Caco-2 (cell line): ENCODE measurements at regions of chr2 and their contacts with region 1.

Region 1: GRCh38 chr2:193584522-193584938 is 1389.8 kb upstream of the TMEFF2 start:
- DNase-seq: peak; percentile 55 to 63
- H3K4me3 ChIP-seq: no peak overlapping the region
- H3K4me3 Mint-ChIP-seq: no peak overlapping the region
- H3K27ac Mint-ChIP-seq: peak overlapping the region; percentile 17
- H3K4me1 ChIP-seq: peaks cover 9% of the 10 kb centered on the region; the same call in 1 of the 2 replicates
- H3K4me1 Mint-ChIP-seq: peaks cover 14% of the 10 kb centered on the region
- H3K27me3 ChIP-seq: no peaks in the 10 kb centered on the region
- H3K27me3 Mint-ChIP-seq: no peaks in the 10 kb centered on the region
- CTCF ChIP-seq: peak; percentile 58 to 59

Region 2: GRCh38 chr2:192749606-192750200 is 834.8 kb before region 1 on chr2:
- CTCF ChIA-PET with region 1: interaction called, 8 read pairs
- POLR2A ChIA-PET with region 1: no interaction called
- intact Hi-C with region 1: loop called (anchors 1 kb)
- DNase-seq: peak in 1 of 2 experiments; percentile 6
- H3K4me3 ChIP-seq: no peak overlapping the region
- H3K4me3 Mint-ChIP-seq: no peak overlapping the region
- H3K27ac Mint-ChIP-seq: no peak overlapping the region
- H3K4me1 ChIP-seq: no peaks in the 10 kb centered on the region
- H3K4me1 Mint-ChIP-seq: no peaks in the 10 kb centered on the region
- H3K27me3 ChIP-seq: no peaks in the 10 kb centered on the region
- H3K27me3 Mint-ChIP-seq: no peaks in the 10 kb centered on the region
- CTCF ChIP-seq: peak; percentile 42 to 46

Region 3: DNA sequence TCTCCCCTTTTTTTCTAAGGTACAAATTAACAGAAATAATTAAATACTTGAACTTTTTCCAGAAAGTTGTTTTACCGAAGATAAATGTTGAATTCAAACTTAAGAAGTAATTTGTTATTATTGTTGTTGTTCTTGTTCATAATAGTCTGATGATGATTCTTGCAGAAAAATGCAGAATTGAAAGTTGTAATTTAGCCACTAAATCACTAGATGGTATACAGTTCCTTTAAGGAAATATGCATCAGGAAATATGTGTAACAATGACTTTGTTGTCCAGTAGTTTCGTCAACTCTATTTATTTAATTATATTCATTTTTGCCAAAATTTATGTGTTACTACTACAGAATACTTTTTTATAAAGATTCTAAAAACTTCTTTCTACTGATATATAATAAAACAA is 473.0 kb before region 1 on chr2:
- CTCF ChIA-PET with region 1: no interaction called
- POLR2A ChIA-PET with region 1: no interaction called
- intact Hi-C with region 1: loop called (anchors 2 kb)
- DNase-seq: no peak
- H3K4me3 ChIP-seq: no peak overlapping the region
- H3K4me3 Mint-ChIP-seq: no peak overlapping the region
- H3K27ac Mint-ChIP-seq: no peak overlapping the region
- H3K4me1 ChIP-seq: no peaks in the 10 kb centered on the region
- H3K4me1 Mint-ChIP-seq: no peaks in the 10 kb centered on the region
- H3K27me3 ChIP-seq: no peaks in the 10 kb centered on the region
- H3K27me3 Mint-ChIP-seq: no peaks in the 10 kb centered on the region
- CTCF ChIP-seq: no peak

Region 4: DNA sequence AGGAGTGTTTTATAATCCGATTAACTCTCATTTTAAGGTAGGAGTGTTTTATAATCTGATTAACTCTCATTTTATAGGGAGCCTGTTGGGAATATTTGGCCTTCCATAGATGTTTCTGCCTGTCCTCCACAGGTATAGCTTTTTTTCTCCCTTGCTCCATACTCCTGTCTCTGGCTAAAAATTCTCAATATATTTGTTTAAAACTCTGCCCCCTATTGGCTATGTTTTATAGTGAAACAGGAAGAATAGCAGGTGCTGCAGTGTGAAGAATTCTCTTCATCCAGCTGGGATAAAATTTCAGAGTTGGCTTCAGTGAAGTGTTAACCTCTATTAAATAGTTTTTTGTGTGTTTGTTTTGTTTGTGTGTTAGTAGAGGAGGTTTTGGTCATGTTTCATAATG is 343.8 kb before region 1 on chr2:
- CTCF ChIA-PET with region 1: no interaction called
- POLR2A ChIA-PET with region 1: no interaction called
- intact Hi-C with region 1: loop called (anchors 2 kb)
- DNase-seq: peak in 1 of 2 experiments; percentile 16
- H3K4me3 ChIP-seq: no peak overlapping the region
- H3K4me3 Mint-ChIP-seq: no peak overlapping the region
- H3K27ac Mint-ChIP-seq: no peak overlapping the region
- H3K4me1 ChIP-seq: no peaks in the 10 kb centered on the region
- H3K4me1 Mint-ChIP-seq: no peaks in the 10 kb centered on the region
- H3K27me3 ChIP-seq: no peaks in the 10 kb centered on the region
- H3K27me3 Mint-ChIP-seq: no peaks in the 10 kb centered on the region
- CTCF ChIP-seq: peak in 1 of 2 experiments; percentile 7

Region 5: DNA sequence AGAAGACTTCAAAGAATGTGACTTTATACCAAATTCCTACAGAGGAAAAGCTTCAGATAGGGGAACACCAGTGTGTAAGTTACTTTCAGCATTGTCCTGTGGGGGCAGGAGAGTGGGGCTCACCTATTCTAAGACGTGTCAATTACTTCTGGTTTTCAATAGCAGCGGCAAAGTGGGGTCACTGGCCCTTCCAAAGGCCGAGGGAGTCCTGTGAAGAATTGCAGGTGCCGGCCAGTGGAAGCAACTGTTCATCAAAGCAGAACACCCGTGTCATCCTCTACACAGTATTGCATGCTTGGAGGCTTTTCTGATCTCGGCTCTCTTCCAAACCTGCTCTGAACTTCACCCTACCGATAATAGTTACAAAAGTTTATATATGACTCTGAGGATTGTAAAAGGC is 213.3 kb before region 1 on chr2:
- CTCF ChIA-PET with region 1: no interaction called
- POLR2A ChIA-PET with region 1: no interaction called
- intact Hi-C with region 1: loop called (anchors 5 kb)
- DNase-seq: no peak
- H3K4me3 ChIP-seq: no peak overlapping the region
- H3K4me3 Mint-ChIP-seq: no peak overlapping the region
- H3K27ac Mint-ChIP-seq: no peak overlapping the region
- H3K4me1 ChIP-seq: no peaks in the 10 kb centered on the region
- H3K4me1 Mint-ChIP-seq: no peaks in the 10 kb centered on the region
- H3K27me3 ChIP-seq: no peaks in the 10 kb centered on the region
- H3K27me3 Mint-ChIP-seq: no peaks in the 10 kb centered on the region
- CTCF ChIP-seq: no peak

Region 6: DNA sequence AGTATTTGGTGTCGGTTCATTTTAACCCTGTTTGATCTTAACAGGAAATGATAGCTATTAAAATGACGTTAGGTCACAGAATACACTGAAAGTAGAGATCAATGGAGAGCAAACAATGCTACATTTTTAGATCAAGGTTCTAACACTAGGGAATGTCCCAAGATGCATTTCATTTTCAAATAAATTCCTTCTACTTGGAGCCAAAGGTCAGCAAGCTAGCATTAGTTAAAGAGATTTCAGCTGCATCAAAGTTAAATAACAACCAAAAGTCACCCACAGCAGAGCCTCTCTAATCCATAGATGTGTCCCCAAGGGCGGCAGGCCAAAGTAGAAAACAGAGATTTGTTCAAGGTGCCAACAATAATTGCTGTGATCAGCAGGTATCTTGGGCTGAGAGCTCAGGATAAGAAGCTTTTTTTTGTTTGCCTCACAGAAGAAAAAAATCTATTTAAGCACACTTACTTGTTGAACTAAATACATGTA is 156.2 kb before region 1 on chr2:
- CTCF ChIA-PET with region 1: interaction called, 7 read pairs
- POLR2A ChIA-PET with region 1: no interaction called
- intact Hi-C with region 1: loop called (anchors 1 kb)
- DNase-seq: peak; percentile 80 to 88
- H3K4me3 ChIP-seq: no peak overlapping the region
- H3K4me3 Mint-ChIP-seq: peak overlapping the region; percentile 44
- H3K27ac Mint-ChIP-seq: peak overlapping the region; percentile 31
- H3K4me1 ChIP-seq: peaks cover 34% of the 10 kb centered on the region
- H3K4me1 Mint-ChIP-seq: peaks cover 10% of the 10 kb centered on the region
- H3K27me3 ChIP-seq: no peaks in the 10 kb centered on the region
- H3K27me3 Mint-ChIP-seq: no peaks in the 10 kb centered on the region
- CTCF ChIP-seq: no peak